ENCODE measurements at regions of chr16 and their contacts with region 1.

Region 1: GRCh38 chr16:16127469-16128116 is 95.7 kb downstream of the ABCC6 start:
- DNase-seq: peak; percentile 33 to 70 (median 64)
- ATAC-seq: peak; percentile 93
- H3K4me3 ChIP-seq: no peak overlapping the region
- H3K4me3 Mint-ChIP-seq: no peak overlapping the region
- H3K27ac ChIP-seq: no peak overlapping the region
- H3K27ac Mint-ChIP-seq: peak overlapping the region in 7 of 9 donors; percentile 25 to 83 (median 56)
- H3K4me1 ChIP-seq: no peaks in the 10 kb centered on the region
- H3K4me1 Mint-ChIP-seq: peaks cover 0 to 6% (median 0%) of the 10 kb centered on the region in 7 donors
- H3K27me3 ChIP-seq: no peaks in the 10 kb centered on the region
- H3K27me3 Mint-ChIP-seq: no peaks in the 10 kb centered on the region

Region 2: DNA sequence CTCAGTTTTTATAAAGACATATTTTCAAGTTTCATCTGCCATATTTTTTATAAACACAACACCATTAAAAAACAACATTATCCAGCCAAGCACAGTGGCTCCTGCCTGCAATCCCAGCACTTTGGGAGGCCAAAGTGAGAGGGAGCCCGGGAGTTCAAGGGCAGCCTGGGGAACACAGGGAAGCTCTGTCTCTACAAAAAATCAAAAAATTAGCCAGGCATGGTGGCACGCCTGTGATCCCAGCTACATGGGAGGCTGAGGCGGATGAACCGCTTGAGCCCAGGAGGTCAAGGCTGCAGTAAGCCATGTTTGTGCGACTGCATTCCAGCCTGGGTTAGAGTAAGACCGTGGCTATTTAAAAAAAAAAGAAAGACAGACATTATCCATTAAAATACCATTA is 1054.5 kb before region 1 on chr16:
- CTCF ChIA-PET with region 1: no interaction called
- POLR2A ChIA-PET with region 1: no interaction called
- intact Hi-C with region 1: loop called in 1 of 2 experiments (anchors 10 kb)
- DNase-seq: no peak
- ATAC-seq: no peak
- H3K4me3 ChIP-seq: no peak overlapping the region
- H3K4me3 Mint-ChIP-seq: no peak overlapping the region
- H3K27ac ChIP-seq: no peak overlapping the region
- H3K27ac Mint-ChIP-seq: peak overlapping the region in 1 of 9 donors; percentile 25
- H3K4me1 ChIP-seq: no peaks in the 10 kb centered on the region
- H3K4me1 Mint-ChIP-seq: peaks cover 0 to 8% (median 3%) of the 10 kb centered on the region in 7 donors
- H3K27me3 ChIP-seq: no peaks in the 10 kb centered on the region
- H3K27me3 Mint-ChIP-seq: no peaks in the 10 kb centered on the region

Region 3: GRCh38 chr16:15704545-15704987 is 423.0 kb before region 1 on chr16:
- CTCF ChIA-PET with region 1: no interaction called
- POLR2A ChIA-PET with region 1: no interaction called
- intact Hi-C with region 1: loop called in 1 of 2 experiments (anchors 1 kb)
- DNase-seq: peak; percentile 48 to 73 (median 66)
- ATAC-seq: peak; percentile 88
- H3K4me3 ChIP-seq: no peak overlapping the region
- H3K4me3 Mint-ChIP-seq: no peak overlapping the region
- H3K27ac ChIP-seq: no peak overlapping the region
- H3K27ac Mint-ChIP-seq: peak overlapping the region; percentile 5 to 93 (median 63)
- H3K4me1 ChIP-seq: no peaks in the 10 kb centered on the region
- H3K4me1 Mint-ChIP-seq: peaks cover 3 to 22% (median 20%) of the 10 kb centered on the region in 7 donors
- H3K27me3 ChIP-seq: no peaks in the 10 kb centered on the region
- H3K27me3 Mint-ChIP-seq: no peaks in the 10 kb centered on the region

Region 4: GRCh38 chr16:15822957-15823356 is 304.6 kb before region 1 on chr16:
- CTCF ChIA-PET with region 1: no interaction called
- POLR2A ChIA-PET with region 1: no interaction called
- intact Hi-C with region 1: loop called (anchors 1 to 5 kb)
- DNase-seq: no peak
- ATAC-seq: no peak
- H3K4me3 ChIP-seq: no peak overlapping the region
- H3K4me3 Mint-ChIP-seq: no peak overlapping the region
- H3K27ac ChIP-seq: no peak overlapping the region
- H3K27ac Mint-ChIP-seq: no peak overlapping the region
- H3K4me1 ChIP-seq: no peaks in the 10 kb centered on the region
- H3K4me1 Mint-ChIP-seq: no peaks in the 10 kb centered on the region
- H3K27me3 ChIP-seq: no peaks in the 10 kb centered on the region
- H3K27me3 Mint-ChIP-seq: no peaks in the 10 kb centered on the region

Region 5: DNA sequence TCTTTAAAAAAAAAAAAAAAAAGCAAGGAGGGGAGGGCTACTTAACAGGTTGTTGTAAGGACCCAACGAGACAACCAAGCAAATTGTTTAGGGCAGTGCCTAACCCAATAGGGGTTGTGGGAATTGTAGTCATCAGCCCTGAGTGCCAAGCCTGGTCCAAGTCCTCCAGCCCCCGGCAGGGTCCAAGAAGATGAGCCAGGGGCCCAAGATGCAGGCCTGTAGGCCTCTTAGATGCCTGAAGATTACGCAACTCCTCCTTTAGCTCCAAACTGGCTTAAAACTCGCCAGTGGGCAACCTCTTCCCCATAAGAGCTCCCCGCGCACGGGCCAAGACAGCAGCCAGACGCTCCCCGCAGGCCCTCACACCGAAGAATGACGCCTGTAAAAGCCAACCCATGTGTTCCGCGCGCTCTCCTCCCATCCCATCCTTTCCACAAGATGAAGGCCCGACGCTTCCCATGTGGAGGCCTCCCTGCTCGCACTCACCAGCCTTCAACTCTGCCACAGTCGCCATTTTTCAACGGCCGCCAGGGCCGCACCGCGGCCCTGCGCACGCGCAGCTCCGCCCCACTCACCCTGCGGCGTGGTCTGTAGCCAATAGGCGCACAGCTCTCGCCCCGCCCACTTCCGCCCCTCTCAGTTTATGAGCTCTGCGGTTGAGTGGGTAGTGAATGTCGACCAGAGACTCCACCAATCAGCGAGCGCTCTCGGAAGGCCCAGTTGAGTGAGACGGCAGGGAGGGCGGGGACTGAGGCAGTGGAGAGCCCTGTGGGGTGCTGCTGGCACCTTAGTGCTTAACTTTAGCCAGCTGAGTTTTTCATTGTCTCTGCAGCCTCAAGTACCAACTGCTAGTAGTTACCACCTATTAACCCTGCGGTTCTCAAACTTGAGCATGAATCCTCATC is 239.3 kb before region 1 on chr16 and contains the start of gene CEP20:
- CTCF ChIA-PET with region 1: interaction called, 3 read pairs
- POLR2A ChIA-PET with region 1: no interaction called
- intact Hi-C with region 1: loop called (anchors 1 kb)
- DNase-seq: peak; percentile 98 to 100 (median 99)
- ATAC-seq: peak; percentile 100
- H3K4me3 ChIP-seq: peak within 1 kb of the TSS; percentile 95
- H3K4me3 Mint-ChIP-seq: peak within 1 kb of the TSS; percentile 96 to 100 (median 99)
- H3K27ac ChIP-seq: peak within 1 kb of the TSS; percentile 89
- H3K27ac Mint-ChIP-seq: peak within 1 kb of the TSS; percentile 94 to 100 (median 97)
- H3K4me1 ChIP-seq: peaks cover 15 to 17% of the 10 kb centered on the region in 2 donors
- H3K4me1 Mint-ChIP-seq: peaks cover 26 to 47% (median 39%) of the 10 kb centered on the region in 7 donors
- H3K27me3 ChIP-seq: no peaks in the 10 kb centered on the region
- H3K27me3 Mint-ChIP-seq: no peaks in the 10 kb centered on the region
- total RNA-seq, gene CEP20: 15.4 to 34.6 (median 27.8) TPM

Region 6: DNA sequence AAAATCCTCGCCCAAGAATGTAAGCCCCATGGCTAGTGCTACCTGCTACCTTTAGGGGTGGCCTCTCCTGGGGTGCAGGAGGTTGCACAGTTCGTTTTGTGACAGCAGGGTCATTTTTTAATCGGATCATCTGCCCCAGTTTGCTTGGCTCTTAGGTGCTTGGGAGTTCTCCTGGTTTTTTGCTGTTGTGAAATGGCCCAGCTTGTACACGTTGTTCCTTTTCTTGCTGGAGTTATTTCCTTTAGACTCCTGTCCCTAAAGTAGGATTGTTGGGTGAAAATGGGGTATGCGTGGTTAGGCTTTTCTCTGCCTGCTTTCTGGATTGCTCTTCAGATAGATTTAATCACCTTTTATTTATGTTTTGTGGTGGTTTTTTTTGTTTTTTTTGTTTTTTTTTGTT is 152.4 kb before region 1 on chr16:
- CTCF ChIA-PET with region 1: no interaction called
- POLR2A ChIA-PET with region 1: no interaction called
- intact Hi-C with region 1: no loop called
- DNase-seq: no peak
- ATAC-seq: no peak
- H3K4me3 ChIP-seq: no peak overlapping the region
- H3K4me3 Mint-ChIP-seq: no peak overlapping the region
- H3K27ac ChIP-seq: no peak overlapping the region
- H3K27ac Mint-ChIP-seq: peak overlapping the region in 2 of 9 donors; percentile 43 to 45
- H3K4me1 ChIP-seq: no peaks in the 10 kb centered on the region
- H3K4me1 Mint-ChIP-seq: peaks cover 19 to 52% (median 32%) of the 10 kb centered on the region in 7 donors
- H3K27me3 ChIP-seq: no peaks in the 10 kb centered on the region
- H3K27me3 Mint-ChIP-seq: no peaks in the 10 kb centered on the region

Region 7: DNA sequence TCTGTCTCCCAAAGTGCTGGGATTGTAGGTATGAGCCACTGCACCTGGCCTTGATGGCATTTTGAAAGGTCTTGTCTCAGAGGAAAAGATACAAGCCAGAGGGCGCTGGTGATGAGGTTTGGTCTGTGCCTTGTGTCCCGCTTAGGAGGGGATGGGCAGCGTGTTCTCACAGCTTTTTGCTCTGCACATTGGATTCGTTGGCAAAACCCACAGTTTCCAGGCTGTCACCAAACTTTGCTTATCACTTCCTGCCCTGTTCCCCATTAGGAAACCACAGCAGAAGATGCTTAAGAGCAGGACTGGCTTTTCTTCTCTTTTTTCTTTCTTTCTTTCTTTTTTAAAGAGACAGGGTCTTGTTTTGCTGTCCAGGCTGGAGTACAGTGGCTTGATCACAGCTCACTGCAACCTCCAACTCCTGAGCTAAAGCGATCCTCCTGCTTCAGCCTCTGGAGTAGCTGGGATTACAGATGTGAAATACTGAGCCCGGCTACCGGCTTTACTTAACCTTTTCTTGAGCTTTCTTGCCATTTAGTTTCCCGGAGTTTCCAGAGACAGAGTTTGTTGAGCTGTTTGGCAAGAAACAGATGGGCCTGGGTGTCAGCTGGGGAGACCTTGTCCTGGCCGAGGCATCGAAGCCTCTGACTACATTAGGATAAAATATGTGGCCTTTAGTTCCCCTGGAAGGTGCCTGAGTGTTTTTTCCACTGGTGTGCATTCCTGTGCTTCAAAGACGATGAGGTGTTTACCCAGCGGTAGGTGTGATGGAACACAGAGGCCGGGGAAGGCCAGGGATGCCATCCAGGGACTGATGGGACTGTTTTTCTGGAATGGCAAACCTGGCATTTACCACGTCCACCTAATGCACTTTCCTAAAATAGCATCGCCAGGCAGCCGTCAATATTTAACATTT is 65.3 kb before region 1 on chr16:
- CTCF ChIA-PET with region 1: no interaction called
- POLR2A ChIA-PET with region 1: no interaction called
- intact Hi-C with region 1: loop called in 1 of 2 experiments (anchors 1 kb)
- DNase-seq: peak in 5 of 9 donors; percentile 8 to 24 (median 18)
- ATAC-seq: peak; percentile 67
- H3K4me3 ChIP-seq: no peak overlapping the region
- H3K4me3 Mint-ChIP-seq: peak overlapping the region in 6 of 10 donors; percentile 6 to 46 (median 20)
- H3K27ac ChIP-seq: no peak overlapping the region
- H3K27ac Mint-ChIP-seq: peak overlapping the region in 6 of 9 donors; percentile 3 to 76 (median 43)
- H3K4me1 ChIP-seq: peaks cover 11 to 12% of the 10 kb centered on the region in 2 donors
- H3K4me1 Mint-ChIP-seq: peaks cover 14 to 49% (median 27%) of the 10 kb centered on the region in 7 donors
- H3K27me3 ChIP-seq: no peaks in the 10 kb centered on the region
- H3K27me3 Mint-ChIP-seq: no peaks in the 10 kb centered on the region

Measured in naive thymus-derived CD4-positive, alpha-beta T cell (primary cell).